ENCODE measurements at regions of chrX and their contacts with region 1.

Region 1: GRCh38 chrX:120228187-120228908 is 22.3 kb upstream of the ZBTB33 start:
- DNase-seq: no peak

Region 2: GRCh38 chrX:120213436-120214265 is 14.7 kb before region 1 on chrX:
- CTCF ChIA-PET with region 1: interaction called, 16 read pairs
- POLR2A ChIA-PET with region 1: no interaction called
- DNase-seq: peak; percentile 81

Measured in HEK293T (cell line).